Sciatic nerve (tissue), 2 donors: ENCODE measurements at regions of chr11 and their contacts with region 1.

Region 1: GRCh38 chr11:39968071-39968470 is 1491.4 kb downstream of the LRRC4C start:
- DNase-seq: no peak
- ATAC-seq: no peak

Region 2: DNA sequence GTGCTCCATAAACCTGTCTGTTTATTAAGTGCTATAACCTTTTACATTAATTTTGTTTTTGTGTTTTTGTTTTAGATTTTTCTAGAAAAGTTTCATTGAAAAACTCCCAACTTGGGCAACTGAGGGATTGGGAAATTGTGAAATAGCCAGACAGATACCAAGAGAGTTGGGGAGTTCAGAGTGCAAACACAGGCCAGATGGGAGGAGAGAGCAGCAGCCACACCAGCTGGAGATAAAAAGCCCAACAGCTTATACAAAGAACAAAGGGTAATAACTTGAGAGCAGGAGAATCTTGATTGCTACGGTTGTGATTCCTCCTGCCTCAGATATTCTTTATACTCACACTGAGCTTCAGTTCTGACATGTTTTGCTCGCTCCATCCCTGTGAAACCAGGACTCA is 150.8 kb before region 1 on chr11:
- intact Hi-C with region 1: no loop called
- DNase-seq: no peak
- ATAC-seq: no peak

Region 3: GRCh38 chr11:39932966-39933365 is 35.1 kb before region 1 on chr11:
- intact Hi-C with region 1: no loop called
- DNase-seq: no peak
- ATAC-seq: no peak

Region 4: GRCh38 chr11:41206388-41206787 is 1238.3 kb after region 1 on chr11:
- intact Hi-C with region 1: loop called (anchors 5 kb)
- DNase-seq: no peak
- ATAC-seq: no peak